Posterior cingulate gyrus (tissue), 11 donors: ENCODE measurements at regions of chr2 and their contacts with region 1.

Region 1: DNA sequence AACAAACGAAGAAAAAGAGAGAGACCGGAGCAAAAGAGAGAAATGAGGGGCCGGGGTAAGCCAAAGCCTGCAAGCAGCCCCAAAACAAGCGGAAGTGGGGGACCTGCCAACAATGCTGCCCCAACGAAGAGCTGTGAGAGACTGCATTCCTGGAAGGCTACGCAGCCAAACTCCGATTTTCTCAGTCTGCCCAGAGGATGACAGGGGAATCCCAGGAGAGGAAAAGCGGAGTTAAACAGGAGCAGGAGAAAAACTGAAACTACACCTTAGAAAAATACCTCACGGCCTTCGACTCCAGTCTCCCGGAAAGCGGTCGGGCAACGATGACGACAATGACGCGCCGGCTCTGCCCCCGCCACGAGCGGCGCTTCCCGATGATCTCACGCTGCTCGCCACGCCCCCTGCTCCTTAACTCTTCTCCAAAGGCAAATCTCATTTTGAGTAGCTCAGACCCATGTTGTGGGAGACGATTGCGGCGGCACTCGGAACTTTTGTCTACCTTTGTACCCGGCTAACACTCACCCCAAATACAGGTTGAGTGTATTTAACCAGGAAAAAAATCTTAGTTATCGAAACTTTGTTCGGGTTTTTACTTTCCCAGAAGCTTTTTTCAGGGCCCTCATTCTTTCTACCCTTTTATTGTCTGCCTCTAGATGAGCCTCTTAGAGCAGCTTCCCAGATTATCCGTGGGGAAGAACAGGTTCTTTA is at the start of gene C1D:
- DNase-seq: peak; percentile 86 to 98 (median 92)

Region 2: DNA sequence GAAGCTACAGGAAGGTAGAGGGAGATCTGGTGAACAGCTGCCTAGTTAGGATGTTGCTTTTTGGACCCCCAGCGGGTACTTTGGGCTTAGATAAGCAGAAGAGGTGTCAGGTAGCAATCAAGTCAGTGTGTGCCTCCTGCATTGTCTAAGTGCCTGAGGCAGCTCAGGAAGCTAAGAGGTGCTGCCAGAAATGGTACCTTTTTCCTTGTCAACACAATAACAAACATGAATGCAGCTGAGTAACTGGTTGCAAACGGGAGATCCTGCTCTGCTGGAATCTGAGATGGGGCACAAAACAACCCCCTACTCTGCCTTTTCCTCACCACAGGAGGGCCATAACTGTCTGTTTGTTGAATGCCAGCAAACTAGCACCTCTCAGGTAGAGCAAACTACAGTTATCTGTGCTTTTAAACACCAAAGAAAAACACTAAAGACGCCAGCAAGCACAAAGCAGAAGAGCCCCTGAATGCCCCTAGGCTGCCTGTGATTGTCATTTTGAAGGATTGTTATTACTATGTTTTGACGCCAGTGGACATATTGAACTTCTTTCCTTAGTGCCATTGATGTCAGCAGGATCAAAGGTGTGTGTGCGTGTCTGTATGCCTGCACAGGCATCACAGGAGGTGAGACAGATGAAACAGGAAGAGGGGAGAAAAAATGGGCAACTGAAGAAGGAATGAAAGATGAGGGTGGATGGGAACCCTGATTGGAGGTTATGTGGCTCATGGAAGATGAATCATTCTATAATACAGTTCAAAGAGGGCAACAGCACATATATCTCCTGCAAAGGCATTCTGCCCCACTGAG is 514.2 kb before region 1 on chr2:
- intact Hi-C with region 1: no loop called
- DNase-seq: no peak

Region 3: DNA sequence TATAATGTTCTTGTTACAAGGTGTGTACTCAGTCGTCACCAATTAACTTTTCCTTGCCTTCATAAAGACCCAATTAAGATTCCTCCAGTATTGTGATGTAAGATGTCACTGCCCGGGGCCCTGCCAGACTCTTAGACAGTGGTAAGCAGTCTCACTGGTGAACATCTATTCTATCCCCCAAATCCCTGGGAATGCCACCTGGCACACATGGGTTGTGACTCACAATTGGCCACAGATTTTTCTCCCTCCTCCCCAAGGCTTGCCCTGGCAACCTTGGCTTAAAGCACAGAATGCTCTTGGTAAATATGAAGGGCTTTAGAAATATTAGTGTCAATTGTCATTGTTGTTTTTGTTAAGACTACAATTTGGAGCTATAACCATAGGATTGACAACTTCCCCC is 377.8 kb before region 1 on chr2:
- intact Hi-C with region 1: no loop called
- DNase-seq: peak in 1 of 10 donors; percentile 8

Region 4: DNA sequence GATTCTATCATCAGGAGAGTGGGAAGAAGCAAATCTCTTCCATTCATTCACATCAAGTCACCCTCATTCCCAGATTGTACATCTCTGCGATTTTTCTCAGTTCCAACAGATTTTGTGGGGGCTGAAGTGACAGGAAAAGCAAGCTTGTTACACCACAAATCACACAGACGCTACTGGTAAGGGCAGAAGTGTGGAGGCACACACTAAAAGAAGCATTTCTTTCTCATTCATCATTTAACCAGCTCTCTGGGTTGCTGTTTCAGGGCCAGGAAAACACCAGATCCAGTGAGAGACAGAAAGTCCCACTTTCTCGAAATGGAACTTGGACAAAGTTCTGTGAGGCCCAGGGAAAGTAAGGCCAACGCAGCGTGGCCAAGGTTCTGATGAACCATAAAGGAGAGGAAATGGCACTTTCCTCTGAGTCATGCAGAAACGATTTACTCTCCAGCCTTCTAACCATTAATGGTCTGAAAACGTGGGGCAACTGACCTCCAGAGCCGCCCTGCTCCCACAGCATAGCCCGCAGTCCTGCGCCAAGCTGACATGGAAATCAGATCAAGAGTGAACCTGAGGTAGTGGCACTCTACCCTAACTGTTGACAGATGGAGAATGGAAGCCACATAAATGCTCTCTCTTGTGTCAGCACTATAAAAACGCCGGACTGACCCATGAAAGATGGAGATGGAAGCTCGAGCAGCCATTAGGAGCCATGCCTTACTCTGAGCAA is 191.0 kb before region 1 on chr2:
- intact Hi-C with region 1: no loop called
- DNase-seq: peak in 5 of 10 donors; percentile 4 to 78 (median 9)

Region 5: GRCh38 chr2:67954093-67954748 is 108.6 kb before region 1 on chr2:
- intact Hi-C with region 1: no loop called
- DNase-seq: no peak

Region 6: GRCh38 chr2:68157402-68158133 is 94.7 kb after region 1 on chr2 and contains the start of gene PNO1:
- intact Hi-C with region 1: loop called (anchors 2 kb)
- DNase-seq: peak; percentile 93 to 99 (median 94)